Activated CD4-positive, alpha-beta T cell treated with anti-CD3 and anti-CD28 coated beads, Interleukin-2, amount 10 ng/mL, durations not matched to agents 7 days and 5 days (primary cell): ENCODE measurements at regions of chr3 and their contacts with region 1.

Region 1: DNA sequence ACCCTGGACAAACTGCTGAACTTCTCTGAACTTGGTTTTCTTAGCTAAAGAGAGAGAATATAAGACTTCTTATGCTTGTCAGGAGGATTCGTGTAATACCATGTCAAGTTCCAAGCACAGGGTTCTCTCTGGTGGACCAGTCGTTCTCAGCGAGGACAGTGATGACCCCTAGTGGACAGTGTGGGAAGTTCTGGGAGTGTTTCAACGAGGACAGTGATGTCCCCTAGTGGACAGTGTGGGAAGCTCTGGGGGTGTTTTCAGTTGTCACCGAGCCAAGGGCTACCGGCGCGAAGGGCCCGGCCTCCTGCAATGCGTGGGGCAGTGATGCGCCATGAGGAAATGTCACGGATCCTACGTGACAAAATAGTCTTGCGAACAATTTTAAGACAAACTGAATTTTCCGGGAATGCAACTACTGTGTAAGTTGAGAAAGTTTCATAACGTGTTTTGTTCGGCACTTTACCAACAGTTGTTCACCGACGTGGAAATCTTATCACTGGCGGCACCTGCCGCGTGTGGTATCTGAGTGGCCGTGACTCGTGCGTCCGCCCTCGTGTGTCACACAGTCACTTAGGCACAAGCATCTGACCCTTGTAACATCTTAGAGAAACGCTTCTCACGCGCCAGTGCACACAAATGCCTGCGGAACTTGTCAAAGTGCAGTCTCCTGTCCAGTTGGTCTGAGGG is 39.3 kb upstream of the MUC4 start:
- DNase-seq: peak; percentile 94
- H3K4me3 Mint-ChIP-seq: no peak overlapping the region
- H3K27ac Mint-ChIP-seq: no peak overlapping the region
- H3K4me1 Mint-ChIP-seq: peaks cover 15% of the 10 kb centered on the region
- H3K27me3 Mint-ChIP-seq: peaks cover 3% of the 10 kb centered on the region

Region 2: GRCh38 chr3:194808640-194809097 is 1042.3 kb before region 1 on chr3:
- CTCF ChIA-PET with region 1: no interaction called
- POLR2A ChIA-PET with region 1: no interaction called
- DNase-seq: no peak
- H3K4me3 Mint-ChIP-seq: no peak overlapping the region
- H3K27ac Mint-ChIP-seq: no peak overlapping the region
- H3K4me1 Mint-ChIP-seq: no peaks in the 10 kb centered on the region
- H3K27me3 Mint-ChIP-seq: peaks cover 9% of the 10 kb centered on the region

Region 3: DNA sequence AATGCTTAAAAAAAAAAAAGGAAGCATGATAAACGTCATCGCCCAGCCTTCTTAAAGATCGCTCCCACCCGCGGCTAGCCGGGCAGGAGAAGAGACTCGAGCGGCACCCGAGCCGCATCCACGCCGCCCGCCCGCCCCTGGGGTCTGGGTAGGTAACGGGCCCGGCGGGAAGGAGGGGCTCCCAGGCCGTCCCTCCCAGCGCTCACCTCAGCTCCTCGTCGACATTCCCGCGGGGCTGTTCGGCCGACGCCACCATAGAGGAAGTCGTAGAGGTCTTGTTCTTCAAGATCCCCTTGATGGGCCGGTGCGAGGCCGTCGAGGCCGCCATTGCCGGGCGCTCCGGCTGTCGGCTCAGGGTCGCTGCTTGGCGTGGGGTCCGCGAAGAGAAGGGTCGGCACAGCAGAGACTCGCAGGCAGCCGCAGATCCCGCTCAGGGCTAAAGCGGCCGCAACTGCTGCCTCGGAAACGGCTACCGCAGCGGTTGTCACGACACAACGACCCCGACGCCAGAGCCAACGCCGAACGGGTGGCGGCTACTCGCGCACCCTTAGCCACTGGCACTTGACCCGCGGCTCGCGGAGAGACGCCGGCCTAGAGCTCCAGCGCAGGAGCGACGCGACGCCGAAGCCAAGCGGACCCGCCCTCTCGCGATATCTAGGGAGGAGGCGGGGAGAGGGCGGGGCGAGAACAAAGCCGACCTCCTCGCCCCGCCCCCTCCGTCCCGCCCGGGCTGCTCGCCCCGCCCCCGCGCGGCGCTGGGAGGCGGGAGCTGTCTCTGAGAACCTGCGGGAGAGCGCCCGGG is 308.1 kb before region 1 on chr3 and contains the start of gene PPP1R2:
- CTCF ChIA-PET with region 1: interaction called, 10 read pairs
- POLR2A ChIA-PET with region 1: no interaction called
- DNase-seq: peak; percentile 91
- H3K4me3 Mint-ChIP-seq: peak within 1 kb of the TSS; percentile 86
- H3K27ac Mint-ChIP-seq: peak within 1 kb of the TSS; percentile 94
- H3K4me1 Mint-ChIP-seq: peaks cover 71% of the 10 kb centered on the region
- H3K27me3 Mint-ChIP-seq: no peaks in the 10 kb centered on the region
- total RNA-seq, gene PPP1R2: 85.9 to 94.3 TPM

Region 4: GRCh38 chr3:195559723-195560409 is 291.1 kb before region 1 on chr3:
- CTCF ChIA-PET with region 1: interaction called, 14 read pairs
- POLR2A ChIA-PET with region 1: no interaction called
- DNase-seq: no peak
- H3K4me3 Mint-ChIP-seq: no peak overlapping the region
- H3K27ac Mint-ChIP-seq: no peak overlapping the region
- H3K4me1 Mint-ChIP-seq: peaks cover 29% of the 10 kb centered on the region
- H3K27me3 Mint-ChIP-seq: no peaks in the 10 kb centered on the region

Region 5: DNA sequence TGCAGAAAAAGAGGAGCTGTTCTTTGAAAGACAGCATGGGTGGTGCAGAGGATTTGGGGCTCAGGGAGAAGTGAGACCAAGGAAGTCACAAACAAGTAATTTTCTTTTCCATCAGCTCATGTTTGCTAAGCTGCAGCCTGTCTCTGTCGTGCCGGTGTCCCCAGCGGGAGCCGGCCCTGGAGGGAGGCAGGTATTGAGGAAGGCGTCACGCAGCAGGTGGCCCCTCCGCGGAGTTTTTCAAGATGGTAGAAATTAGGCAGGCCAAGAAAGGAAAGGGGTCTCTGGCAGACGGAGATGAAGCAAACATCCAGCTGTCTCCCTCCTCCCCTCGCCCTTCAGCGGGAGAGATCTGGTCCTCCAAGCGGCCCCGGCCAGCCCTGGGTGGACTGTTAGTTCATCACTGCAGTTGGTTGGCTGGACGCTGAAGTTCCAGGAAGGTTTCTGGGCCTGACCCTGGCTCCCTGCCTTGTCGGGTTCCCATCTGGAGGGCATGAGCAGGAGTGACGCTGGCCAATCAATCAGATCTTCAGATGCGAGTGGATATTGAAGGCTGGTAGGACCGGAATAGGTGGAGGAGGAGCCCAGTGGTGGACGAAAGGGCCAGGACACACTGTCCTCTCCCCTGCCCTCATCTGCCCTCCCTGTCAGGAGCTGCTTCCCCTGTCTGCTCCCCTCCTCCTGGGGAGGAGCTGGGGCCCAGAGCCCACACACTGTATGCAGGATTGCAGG is 11.6 kb before region 1 on chr3:
- CTCF ChIA-PET with region 1: interaction called, 27 read pairs
- POLR2A ChIA-PET with region 1: no interaction called
- DNase-seq: no peak
- H3K4me3 Mint-ChIP-seq: no peak overlapping the region
- H3K27ac Mint-ChIP-seq: no peak overlapping the region
- H3K4me1 Mint-ChIP-seq: no peaks in the 10 kb centered on the region
- H3K27me3 Mint-ChIP-seq: no peaks in the 10 kb centered on the region

Region 6: GRCh38 chr3:195909644-195910508 is 58.9 kb after region 1 on chr3:
- CTCF ChIA-PET with region 1: interaction called, 25 read pairs
- POLR2A ChIA-PET with region 1: no interaction called
- DNase-seq: peak; percentile 88
- H3K4me3 Mint-ChIP-seq: peak overlapping the region; percentile 72
- H3K27ac Mint-ChIP-seq: peak overlapping the region; percentile 76
- H3K4me1 Mint-ChIP-seq: peaks cover 26% of the 10 kb centered on the region
- H3K27me3 Mint-ChIP-seq: no peaks in the 10 kb centered on the region

Region 7: GRCh38 chr3:196115678-196116083 is 264.7 kb after region 1 on chr3:
- CTCF ChIA-PET with region 1: no interaction called
- POLR2A ChIA-PET with region 1: no interaction called
- DNase-seq: peak; percentile 29
- H3K4me3 Mint-ChIP-seq: no peak overlapping the region
- H3K27ac Mint-ChIP-seq: no peak overlapping the region
- H3K4me1 Mint-ChIP-seq: peaks cover 30% of the 10 kb centered on the region
- H3K27me3 Mint-ChIP-seq: no peaks in the 10 kb centered on the region